Activated naive CD4-positive, alpha-beta T cell treated with anti-CD3 and anti-CD28 coated beads for 36 hours (primary cell): ENCODE measurements at regions of chr4 and their contacts with region 1.

Region 1: DNA sequence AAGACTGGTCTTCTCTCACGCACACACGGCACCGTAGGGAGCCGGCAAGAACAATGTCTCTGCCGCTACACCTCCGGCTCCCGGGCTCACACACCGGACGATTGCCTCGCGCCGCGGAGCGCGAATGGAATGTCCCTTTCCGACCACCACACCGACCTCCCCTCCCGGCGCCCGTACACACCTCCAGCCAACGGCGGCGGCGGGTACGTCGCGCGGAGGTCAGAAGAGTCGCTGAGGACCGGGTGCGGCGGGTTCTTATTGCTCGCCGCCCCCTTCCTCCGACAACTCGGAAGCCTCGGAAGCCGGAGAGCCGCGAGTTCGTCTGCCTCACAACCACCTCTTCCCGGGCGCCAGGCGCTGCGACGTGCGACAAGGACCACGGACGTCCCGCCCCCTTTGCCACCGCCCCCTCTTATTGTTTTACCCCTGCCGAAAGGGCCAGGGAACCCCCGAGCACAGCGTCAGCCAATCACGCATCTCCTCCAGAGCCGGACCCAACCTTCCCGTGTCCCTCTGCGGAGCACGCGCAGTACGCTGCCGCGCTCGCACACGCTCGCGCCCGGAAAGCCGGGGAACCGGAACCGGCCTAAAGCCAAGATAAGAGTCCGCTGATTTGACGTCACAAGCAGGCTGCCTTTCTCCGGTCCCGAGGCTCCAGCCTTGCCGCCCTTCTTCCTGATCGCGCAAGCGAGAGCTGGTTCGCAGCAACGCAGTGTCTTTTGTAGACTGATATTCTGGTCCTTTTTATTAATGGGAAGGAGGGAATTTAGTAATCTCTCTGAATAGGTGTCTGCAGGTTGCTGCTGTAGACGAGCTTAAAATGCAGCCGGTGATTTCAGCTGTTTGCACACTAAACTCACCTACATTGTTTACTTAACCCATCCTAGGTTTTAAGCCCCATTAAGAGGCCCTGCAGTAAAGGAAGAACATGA is at the start of gene G3BP2:
- DNase-seq: peak; percentile 99
- H3K4me3 Mint-ChIP-seq: peak within 1 kb of the TSS; percentile 97
- H3K27ac Mint-ChIP-seq: peak within 1 kb of the TSS; percentile 99
- H3K4me1 Mint-ChIP-seq: peaks cover 39% of the 10 kb centered on the region
- H3K27me3 Mint-ChIP-seq: no peaks in the 10 kb centered on the region
- total RNA-seq, gene G3BP2: 134 to 144 TPM

Region 2: GRCh38 chr4:75630174-75630936 is 42.9 kb before region 1 on chr4 and contains the start of gene CDKL2:
- CTCF ChIA-PET with region 1: no interaction called
- intact Hi-C with region 1: loop called (anchors 1 kb)
- DNase-seq: peak; percentile 91
- H3K4me3 Mint-ChIP-seq: peak within 1 kb of the TSS; percentile 72
- H3K27ac Mint-ChIP-seq: no peak within 1 kb of the TSS
- H3K4me1 Mint-ChIP-seq: peaks cover 5% of the 10 kb centered on the region
- H3K27me3 Mint-ChIP-seq: no peaks in the 10 kb centered on the region
- total RNA-seq, gene CDKL2: 0.79 to 1.2 TPM

Region 3: GRCh38 chr4:75698162-75698962 is 25.1 kb after region 1 on chr4:
- CTCF ChIA-PET with region 1: no interaction called
- intact Hi-C with region 1: loop called (anchors 1 kb)
- DNase-seq: peak; percentile 38
- H3K4me3 Mint-ChIP-seq: no peak overlapping the region
- H3K27ac Mint-ChIP-seq: peak overlapping the region; percentile 11
- H3K4me1 Mint-ChIP-seq: peaks cover 29% of the 10 kb centered on the region
- H3K27me3 Mint-ChIP-seq: no peaks in the 10 kb centered on the region

Region 4: GRCh38 chr4:75989846-75990528 is 316.7 kb after region 1 on chr4:
- CTCF ChIA-PET with region 1: no interaction called
- intact Hi-C with region 1: loop called (anchors 5 kb)
- DNase-seq: no peak
- H3K4me3 Mint-ChIP-seq: peak overlapping the region; percentile 85
- H3K27ac Mint-ChIP-seq: peak overlapping the region; percentile 72
- H3K4me1 Mint-ChIP-seq: peaks cover 27% of the 10 kb centered on the region
- H3K27me3 Mint-ChIP-seq: no peaks in the 10 kb centered on the region

Region 5: DNA sequence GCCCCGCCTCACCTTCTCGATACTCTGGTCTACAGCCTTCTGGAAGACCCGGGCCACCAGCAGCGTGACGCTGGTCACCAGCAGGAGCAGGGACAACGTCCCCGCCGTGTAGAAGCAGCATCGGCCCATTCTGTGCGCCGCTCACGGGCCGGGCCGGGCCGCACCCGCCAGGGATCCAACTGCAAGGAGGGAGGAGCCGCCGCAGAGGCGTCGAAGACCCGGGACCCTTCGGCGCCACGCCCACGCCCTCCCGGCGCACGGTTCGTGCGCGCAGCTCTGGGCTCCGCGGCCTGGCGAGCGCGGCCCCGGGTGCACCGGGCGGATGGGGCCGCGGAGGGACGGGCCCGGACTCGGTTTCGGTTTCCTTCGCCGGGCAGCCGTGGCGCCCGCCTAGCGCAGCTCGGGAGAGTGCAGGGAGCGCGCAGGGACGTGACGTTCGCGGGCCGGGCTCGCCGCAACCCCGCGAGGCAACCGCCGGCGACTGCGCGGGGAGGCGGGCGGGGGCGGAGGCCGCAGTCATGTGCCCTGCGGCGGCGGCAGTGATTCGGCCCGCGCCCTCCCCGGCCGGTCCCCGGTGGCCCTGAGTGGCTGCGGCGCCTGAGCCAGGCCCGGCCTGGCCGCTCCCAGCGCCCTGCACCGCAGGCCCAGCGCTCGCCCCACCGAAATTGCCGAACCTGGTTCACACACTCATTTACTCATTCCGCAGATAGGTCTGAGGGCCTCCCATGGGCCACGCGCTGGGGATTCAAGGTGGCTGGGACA is 540.3 kb after region 1 on chr4 and contains the start of gene SCARB2:
- CTCF ChIA-PET with region 1: no interaction called
- intact Hi-C with region 1: loop called (anchors 5 kb)
- DNase-seq: peak; percentile 76
- H3K4me3 Mint-ChIP-seq: peak within 1 kb of the TSS; percentile 76
- H3K27ac Mint-ChIP-seq: peak within 1 kb of the TSS; percentile 74
- H3K4me1 Mint-ChIP-seq: peaks cover 31% of the 10 kb centered on the region
- H3K27me3 Mint-ChIP-seq: no peaks in the 10 kb centered on the region
- total RNA-seq, gene SCARB2: 5.4 to 7.8 TPM

Region 6: DNA sequence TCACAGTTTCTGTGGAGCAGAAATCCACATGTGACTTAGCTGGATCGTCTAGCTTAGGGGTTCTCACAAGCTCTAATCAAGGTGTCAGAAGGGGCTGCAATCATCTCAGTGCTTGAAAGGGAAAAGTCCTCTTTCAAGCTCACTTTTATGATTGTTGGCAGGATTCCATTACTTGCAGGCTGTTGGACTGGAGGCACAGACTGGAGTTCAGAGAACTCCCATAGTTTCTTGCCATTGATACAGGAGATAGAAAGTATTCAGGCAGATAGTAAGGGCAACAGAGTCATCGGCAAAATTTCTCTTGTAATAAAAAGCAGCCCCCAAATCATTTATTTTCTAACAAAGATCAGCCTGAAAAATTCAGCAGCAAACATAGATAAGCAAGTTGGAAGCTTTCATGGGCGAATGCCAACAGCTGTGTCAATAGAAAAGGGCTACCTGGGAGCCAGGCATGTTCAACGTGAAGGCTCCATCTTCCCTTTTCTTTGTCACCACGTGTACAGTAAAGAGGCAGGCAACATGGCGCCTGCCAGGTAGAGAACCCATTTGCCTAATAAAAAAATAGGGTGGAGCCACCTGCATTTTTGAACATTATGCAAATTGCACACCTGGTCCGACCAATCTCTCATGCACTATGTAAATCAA is 1996.8 kb after region 1 on chr4:
- CTCF ChIA-PET with region 1: no interaction called
- intact Hi-C with region 1: no loop called
- DNase-seq: no peak
- H3K4me3 Mint-ChIP-seq: no peak overlapping the region
- H3K27ac Mint-ChIP-seq: no peak overlapping the region
- H3K4me1 Mint-ChIP-seq: no peaks in the 10 kb centered on the region
- H3K27me3 Mint-ChIP-seq: no peaks in the 10 kb centered on the region